ENCODE measurements at regions of chr3 and their contacts with region 1.

Region 1: GRCh38 chr3:196609343-196609775 is 30.1 kb upstream of the NRROS start:
- DNase-seq: peak; percentile 82 to 91 (median 87)
- H3K4me3 ChIP-seq: no peak overlapping the region
- H3K4me3 Mint-ChIP-seq: peak overlapping the region; percentile 65 to 79 (median 72)
- H3K27ac ChIP-seq: peak overlapping the region; percentile 37
- H3K27ac Mint-ChIP-seq: peak overlapping the region; percentile 79 to 96 (median 93)
- H3K4me1 ChIP-seq: peaks cover 43% of the 10 kb centered on the region
- H3K4me1 Mint-ChIP-seq: peaks cover 32 to 50% (median 40%) of the 10 kb centered on the region in 4 donors
- H3K27me3 ChIP-seq: no peaks in the 10 kb centered on the region
- H3K27me3 Mint-ChIP-seq: no peaks in the 10 kb centered on the region

Region 2: DNA sequence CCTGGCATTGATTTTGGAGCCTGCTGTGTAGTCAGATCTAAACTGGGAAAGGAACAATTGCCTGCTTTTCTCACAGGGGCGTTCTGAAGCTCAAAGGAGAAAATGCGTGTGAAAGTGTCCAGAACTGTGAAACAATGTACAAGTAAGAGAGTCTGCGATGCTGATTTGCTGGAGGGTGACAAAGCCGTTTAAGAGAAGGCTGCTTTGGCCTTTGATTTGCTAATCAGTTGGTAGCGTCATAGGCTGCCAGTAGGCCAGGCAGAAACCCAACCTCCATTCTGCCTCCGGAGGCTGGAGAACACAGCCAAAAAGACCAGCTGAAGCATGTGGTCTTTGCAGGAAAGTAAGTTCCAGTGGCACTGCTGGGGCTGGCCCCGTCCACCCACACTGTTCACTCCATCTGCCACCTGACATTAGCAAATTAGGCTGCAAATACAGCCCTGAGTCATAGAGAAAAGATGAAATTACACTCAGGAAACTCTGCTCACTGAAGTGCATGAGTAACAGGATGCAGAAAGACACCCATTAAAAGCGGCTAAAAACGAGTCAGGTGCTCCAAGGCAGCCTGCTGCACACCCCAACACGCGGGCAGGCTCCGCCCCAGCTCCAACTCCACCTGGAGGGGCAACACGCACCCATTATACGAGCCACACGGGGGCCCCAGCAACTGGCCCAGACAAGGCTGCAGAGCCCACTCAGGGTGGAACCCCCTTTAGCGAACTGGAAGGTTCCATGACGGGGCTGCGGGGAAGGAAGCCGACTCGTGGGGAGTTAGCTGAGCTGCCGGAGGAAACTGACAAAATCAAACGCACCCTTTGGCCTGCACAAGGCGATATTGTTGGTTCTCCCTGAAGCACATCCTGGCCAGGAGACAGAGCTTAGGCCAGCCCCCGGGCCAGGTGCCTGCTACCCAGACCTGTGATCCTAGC is 429.7 kb before region 1 on chr3:
- CTCF ChIA-PET with region 1: no interaction called
- POLR2A ChIA-PET with region 1: no interaction called
- intact Hi-C with region 1: no loop called
- DNase-seq: peak; percentile 83 to 94 (median 85)
- H3K4me3 ChIP-seq: peak overlapping the region in 1 of 2 donors; percentile 34
- H3K4me3 Mint-ChIP-seq: peak overlapping the region; percentile 46 to 85 (median 78)
- H3K27ac ChIP-seq: peak overlapping the region; percentile 61
- H3K27ac Mint-ChIP-seq: peak overlapping the region; percentile 91 to 99 (median 98)
- H3K4me1 ChIP-seq: peaks cover 66% of the 10 kb centered on the region
- H3K4me1 Mint-ChIP-seq: peaks cover 34 to 64% (median 47%) of the 10 kb centered on the region in 4 donors
- H3K27me3 ChIP-seq: no peaks in the 10 kb centered on the region
- H3K27me3 Mint-ChIP-seq: no peaks in the 10 kb centered on the region

Region 3: GRCh38 chr3:196537319-196537984 is 71.9 kb before region 1 on chr3:
- CTCF ChIA-PET with region 1: interaction called, 17 read pairs
- POLR2A ChIA-PET with region 1: interaction called, 4 read pairs
- intact Hi-C with region 1: loop called (anchors 2 kb)
- DNase-seq: peak; percentile 40 to 62 (median 49)
- H3K4me3 ChIP-seq: no peak overlapping the region
- H3K4me3 Mint-ChIP-seq: no peak overlapping the region
- H3K27ac ChIP-seq: no peak overlapping the region
- H3K27ac Mint-ChIP-seq: peak overlapping the region in 1 of 7 donors; percentile 19
- H3K4me1 ChIP-seq: no peaks in the 10 kb centered on the region
- H3K4me1 Mint-ChIP-seq: peaks cover 0 to 3% (median 1%) of the 10 kb centered on the region in 4 donors
- H3K27me3 ChIP-seq: no peaks in the 10 kb centered on the region
- H3K27me3 Mint-ChIP-seq: peaks cover 0 to 2% of the 10 kb centered on the region in 2 donors

Region 4: GRCh38 chr3:196632046-196632751 is 22.8 kb after region 1 on chr3:
- CTCF ChIA-PET with region 1: interaction called, 116 read pairs
- POLR2A ChIA-PET with region 1: interaction called, 121 read pairs
- intact Hi-C with region 1: loop called (anchors 1 kb)
- DNase-seq: peak; percentile 91 to 94 (median 92)
- H3K4me3 ChIP-seq: peak overlapping the region; percentile 24 to 77
- H3K4me3 Mint-ChIP-seq: peak overlapping the region; percentile 80 to 93 (median 86)
- H3K27ac ChIP-seq: peak overlapping the region; percentile 69
- H3K27ac Mint-ChIP-seq: peak overlapping the region; percentile 94 to 98 (median 96)
- H3K4me1 ChIP-seq: peaks cover 57% of the 10 kb centered on the region
- H3K4me1 Mint-ChIP-seq: peaks cover 34 to 70% (median 52%) of the 10 kb centered on the region in 4 donors
- H3K27me3 ChIP-seq: no peaks in the 10 kb centered on the region
- H3K27me3 Mint-ChIP-seq: no peaks in the 10 kb centered on the region

Region 5: GRCh38 chr3:196645096-196645495 is 35.7 kb after region 1 on chr3:
- CTCF ChIA-PET with region 1: interaction called, 63 read pairs
- POLR2A ChIA-PET with region 1: interaction called, 66 read pairs
- intact Hi-C with region 1: no loop called
- DNase-seq: peak in 1 of 5 donors; percentile 46
- H3K4me3 ChIP-seq: no peak overlapping the region
- H3K4me3 Mint-ChIP-seq: peak overlapping the region in 4 of 8 donors; percentile 13 to 63 (median 52)
- H3K27ac ChIP-seq: no peak overlapping the region
- H3K27ac Mint-ChIP-seq: peak overlapping the region; percentile 75 to 88 (median 85)
- H3K4me1 ChIP-seq: peaks cover 84% of the 10 kb centered on the region
- H3K4me1 Mint-ChIP-seq: peaks cover 53 to 90% (median 68%) of the 10 kb centered on the region in 4 donors
- H3K27me3 ChIP-seq: no peaks in the 10 kb centered on the region
- H3K27me3 Mint-ChIP-seq: no peaks in the 10 kb centered on the region

Region 6: GRCh38 chr3:196684548-196685407 is 75.4 kb after region 1 on chr3:
- CTCF ChIA-PET with region 1: interaction called, 360 read pairs
- POLR2A ChIA-PET with region 1: interaction called, 39 read pairs
- intact Hi-C with region 1: loop called (anchors 1 kb)
- DNase-seq: peak; percentile 61 to 75 (median 65)
- H3K4me3 ChIP-seq: peak overlapping the region in 1 of 2 donors; percentile 40
- H3K4me3 Mint-ChIP-seq: peak overlapping the region; percentile 39 to 80 (median 70)
- H3K27ac ChIP-seq: no peak overlapping the region
- H3K27ac Mint-ChIP-seq: peak overlapping the region in 5 of 7 donors; percentile 19 to 81 (median 64)
- H3K4me1 ChIP-seq: peaks cover 11% of the 10 kb centered on the region
- H3K4me1 Mint-ChIP-seq: peaks cover 10 to 16% (median 14%) of the 10 kb centered on the region in 4 donors
- H3K27me3 ChIP-seq: no peaks in the 10 kb centered on the region
- H3K27me3 Mint-ChIP-seq: no peaks in the 10 kb centered on the region

Region 7: GRCh38 chr3:196969660-196970546 is 360.5 kb after region 1 on chr3:
- CTCF ChIA-PET with region 1: no interaction called
- POLR2A ChIA-PET with region 1: no interaction called
- intact Hi-C with region 1: loop called (anchors 1 kb)
- DNase-seq: peak; percentile 53 to 69 (median 68)
- H3K4me3 ChIP-seq: peak overlapping the region in 1 of 2 donors; percentile 64
- H3K4me3 Mint-ChIP-seq: peak overlapping the region; percentile 67 to 86 (median 80)
- H3K27ac ChIP-seq: peak overlapping the region; percentile 4
- H3K27ac Mint-ChIP-seq: peak overlapping the region in 3 of 7 donors; percentile 17 to 71 (median 41)
- H3K4me1 ChIP-seq: peaks cover 8% of the 10 kb centered on the region
- H3K4me1 Mint-ChIP-seq: peaks cover 0 to 16% (median 4%) of the 10 kb centered on the region in 4 donors
- H3K27me3 ChIP-seq: no peaks in the 10 kb centered on the region
- H3K27me3 Mint-ChIP-seq: peaks cover 0 to 1% of the 10 kb centered on the region in 2 donors

Measured in CD4-positive, alpha-beta memory T cell (primary cell).